Activated CD4-positive, alpha-beta memory T cell treated with anti-CD3 and anti-CD28 coated beads, Interleukin-2, amount 10 ng/mL, durations not matched to agents 7 days and 5 days (primary cell): ENCODE measurements at regions of chr5 and their contacts with region 1.

Region 1: DNA sequence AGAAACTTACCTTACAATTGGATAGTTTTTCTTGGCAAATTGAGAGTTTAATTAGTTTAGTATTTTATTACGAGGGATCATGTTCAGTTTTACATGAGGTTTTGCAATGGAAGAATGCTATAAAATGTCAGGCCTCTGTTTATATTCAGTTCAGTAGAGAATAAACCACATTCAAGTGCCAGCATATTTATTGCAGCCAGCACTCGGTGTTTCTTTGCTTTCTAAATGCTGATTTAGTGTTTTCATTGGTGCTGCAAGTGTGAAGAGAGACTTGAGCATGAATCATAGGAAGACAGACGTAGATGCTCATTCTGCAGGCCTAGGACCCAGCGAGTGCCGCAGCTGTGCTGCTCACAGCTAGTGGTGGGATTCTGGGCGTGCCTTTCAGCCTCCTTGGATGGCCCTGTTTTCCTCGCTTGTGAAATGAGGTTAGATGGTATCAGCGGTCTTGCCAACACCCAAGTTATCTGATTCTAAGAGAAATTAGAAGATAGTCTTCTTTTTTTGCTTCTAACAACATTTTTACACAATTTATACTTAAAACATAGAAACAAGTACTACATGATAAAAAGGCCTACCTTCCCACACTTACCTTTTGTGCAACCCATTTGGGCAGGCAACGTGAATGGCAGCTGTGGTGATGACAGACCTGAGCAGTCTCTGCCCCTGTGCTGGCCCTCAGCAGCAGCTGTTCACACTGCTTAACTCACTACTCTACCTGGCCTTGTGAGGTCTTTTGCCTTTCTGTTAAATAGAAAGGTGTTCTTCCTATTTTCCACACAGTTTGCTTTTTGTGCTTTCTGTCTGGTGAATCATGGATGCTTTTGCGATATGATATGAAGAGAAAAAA is 26.8 kb upstream of the TNFAIP8 start:
- DNase-seq: peak; percentile 73
- H3K4me3 Mint-ChIP-seq: peak overlapping the region; percentile 36
- H3K27ac Mint-ChIP-seq: peak overlapping the region; percentile 87
- H3K4me1 Mint-ChIP-seq: peaks cover 85% of the 10 kb centered on the region
- H3K27me3 Mint-ChIP-seq: no peaks in the 10 kb centered on the region

Region 2: DNA sequence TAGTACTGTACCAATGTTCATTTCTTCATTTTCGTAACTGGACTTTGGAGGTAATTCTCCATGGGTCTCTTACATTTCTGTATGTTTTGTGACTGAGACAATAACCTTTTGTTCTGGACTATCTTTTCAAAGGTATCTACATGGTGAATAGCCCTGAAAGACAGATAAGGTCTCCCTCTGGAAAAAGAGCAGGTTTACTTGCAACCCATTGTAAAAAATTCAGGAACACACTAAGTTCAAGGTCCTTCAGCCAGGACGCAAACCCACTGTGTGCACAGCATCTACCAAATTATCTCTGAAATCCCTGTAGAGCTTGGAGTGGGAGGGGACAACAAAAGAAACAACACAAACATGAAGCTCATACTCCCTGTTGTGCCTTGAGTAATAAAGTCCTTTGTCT is 349.0 kb before region 1 on chr5:
- CTCF ChIA-PET with region 1: no interaction called
- POLR2A ChIA-PET with region 1: no interaction called
- DNase-seq: no peak
- H3K4me3 Mint-ChIP-seq: no peak overlapping the region
- H3K27ac Mint-ChIP-seq: no peak overlapping the region
- H3K4me1 Mint-ChIP-seq: no peaks in the 10 kb centered on the region
- H3K27me3 Mint-ChIP-seq: no peaks in the 10 kb centered on the region

Region 3: DNA sequence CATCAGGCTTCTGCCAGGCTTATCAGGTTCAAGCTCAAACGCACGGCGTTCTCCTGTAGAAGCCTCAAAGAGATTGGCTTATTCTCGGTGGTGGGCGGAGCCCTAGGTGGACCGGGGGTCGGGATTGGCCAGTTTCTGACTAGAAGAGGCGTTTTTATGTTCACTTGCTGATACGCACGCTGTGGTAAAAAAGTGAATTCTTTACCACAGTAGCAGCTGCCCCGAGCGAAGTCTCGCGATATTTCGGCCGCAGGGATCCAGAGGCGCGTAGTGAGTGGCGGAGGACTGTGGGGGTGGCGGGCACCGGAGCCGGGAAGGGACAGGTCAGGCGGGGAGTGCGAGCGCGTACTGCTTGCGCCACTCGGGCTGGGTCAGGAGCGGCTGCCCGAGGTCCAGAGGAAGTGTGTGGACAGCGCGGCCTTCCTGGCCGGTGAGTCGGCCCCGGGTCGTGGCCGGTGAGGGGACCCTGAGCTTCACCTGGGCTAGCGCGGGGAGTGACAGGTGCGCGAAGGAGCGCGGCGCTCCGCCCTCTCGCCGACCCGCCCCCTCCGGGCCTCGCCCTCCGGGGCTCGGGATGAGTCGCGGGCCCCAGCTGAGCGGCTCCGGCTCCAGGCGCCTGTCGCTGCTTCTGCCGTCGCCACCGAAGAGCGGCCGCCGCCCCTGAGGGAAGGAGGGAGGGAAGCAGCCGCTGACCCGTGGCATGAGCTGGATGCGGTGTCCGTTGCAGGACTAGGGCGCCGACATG is 258.0 kb before region 1 on chr5 and contains the start of gene DMXL1:
- CTCF ChIA-PET with region 1: interaction called, 7 read pairs
- POLR2A ChIA-PET with region 1: interaction called, 11 read pairs
- DNase-seq: peak; percentile 99
- H3K4me3 Mint-ChIP-seq: peak within 1 kb of the TSS; percentile 89
- H3K27ac Mint-ChIP-seq: peak within 1 kb of the TSS; percentile 96
- H3K4me1 Mint-ChIP-seq: peaks cover 41% of the 10 kb centered on the region
- H3K27me3 Mint-ChIP-seq: no peaks in the 10 kb centered on the region
- total RNA-seq, gene DMXL1: 31.5 to 33.0 TPM

Region 4: DNA sequence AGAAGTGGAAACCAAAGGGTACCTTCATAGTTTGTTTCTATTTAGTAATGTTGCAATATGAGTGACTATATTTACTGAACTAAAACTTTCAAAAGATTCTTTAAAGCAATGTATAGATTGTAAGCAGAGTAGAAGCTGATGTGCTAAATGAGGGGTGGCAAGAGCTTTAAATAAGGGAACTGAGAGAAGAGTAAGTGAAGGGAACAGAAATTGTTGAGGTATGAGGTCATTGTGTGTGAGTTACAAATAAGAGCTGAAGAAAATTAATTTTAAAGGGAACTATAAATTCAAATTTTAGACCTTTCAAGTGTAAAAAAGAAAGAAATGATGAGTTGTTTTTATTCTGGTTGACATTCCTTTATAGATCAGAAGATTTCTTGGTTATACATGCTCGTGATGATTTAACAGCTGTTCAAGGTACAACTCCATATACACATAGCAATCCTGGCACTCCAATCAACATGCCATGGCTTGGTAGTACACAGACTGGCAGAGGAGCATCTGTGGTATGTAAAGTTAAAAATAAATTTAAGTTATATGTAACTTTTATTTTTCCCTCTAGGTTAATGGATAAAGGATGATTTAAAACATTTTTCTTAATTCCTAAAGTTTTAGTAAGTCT is 108.3 kb before region 1 on chr5:
- CTCF ChIA-PET with region 1: no interaction called
- POLR2A ChIA-PET with region 1: no interaction called
- DNase-seq: no peak
- H3K4me3 Mint-ChIP-seq: no peak overlapping the region
- H3K27ac Mint-ChIP-seq: no peak overlapping the region
- H3K4me1 Mint-ChIP-seq: no peaks in the 10 kb centered on the region
- H3K27me3 Mint-ChIP-seq: no peaks in the 10 kb centered on the region

Region 5: GRCh38 chr5:119250946-119251901 is 77.8 kb before region 1 on chr5:
- CTCF ChIA-PET with region 1: no interaction called
- POLR2A ChIA-PET with region 1: no interaction called
- DNase-seq: no peak
- H3K4me3 Mint-ChIP-seq: no peak overlapping the region
- H3K27ac Mint-ChIP-seq: no peak overlapping the region
- H3K4me1 Mint-ChIP-seq: peaks cover 2% of the 10 kb centered on the region
- H3K27me3 Mint-ChIP-seq: no peaks in the 10 kb centered on the region

Region 6: DNA sequence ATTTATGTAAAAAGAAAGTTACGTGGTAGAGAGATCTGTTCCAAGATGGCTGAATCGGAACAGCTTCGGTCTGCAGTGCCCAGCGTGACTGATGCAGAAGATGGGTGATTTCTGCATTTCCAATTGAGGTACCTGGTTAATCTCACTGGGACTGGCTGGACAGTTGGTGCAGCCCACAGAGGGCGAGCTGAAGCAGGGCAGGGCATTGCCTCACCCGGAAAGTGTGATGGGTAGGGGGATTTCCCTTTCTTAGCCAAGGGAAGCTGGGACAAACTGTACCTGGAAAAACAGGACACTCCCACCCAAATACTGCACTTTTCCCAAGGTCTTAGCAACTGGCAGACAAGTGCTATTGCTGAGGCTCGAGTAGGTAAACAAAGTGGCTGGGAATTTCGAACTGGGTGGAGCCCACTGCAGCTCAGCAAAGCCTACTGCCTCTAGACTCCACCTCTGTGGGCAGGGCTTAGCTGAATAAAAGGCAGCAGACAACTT is 110.2 kb after region 1 on chr5:
- CTCF ChIA-PET with region 1: no interaction called
- POLR2A ChIA-PET with region 1: no interaction called
- DNase-seq: no peak
- H3K4me3 Mint-ChIP-seq: peak overlapping the region; percentile 48
- H3K27ac Mint-ChIP-seq: no peak overlapping the region
- H3K4me1 Mint-ChIP-seq: peaks cover 17% of the 10 kb centered on the region
- H3K27me3 Mint-ChIP-seq: peaks cover 39% of the 10 kb centered on the region